Activated CD4-positive, alpha-beta T cell treated with anti-CD3 and anti-CD28 coated beads for 36 hours (primary cell): ENCODE measurements at regions of chr21 and their contacts with region 1.

Region 1: DNA sequence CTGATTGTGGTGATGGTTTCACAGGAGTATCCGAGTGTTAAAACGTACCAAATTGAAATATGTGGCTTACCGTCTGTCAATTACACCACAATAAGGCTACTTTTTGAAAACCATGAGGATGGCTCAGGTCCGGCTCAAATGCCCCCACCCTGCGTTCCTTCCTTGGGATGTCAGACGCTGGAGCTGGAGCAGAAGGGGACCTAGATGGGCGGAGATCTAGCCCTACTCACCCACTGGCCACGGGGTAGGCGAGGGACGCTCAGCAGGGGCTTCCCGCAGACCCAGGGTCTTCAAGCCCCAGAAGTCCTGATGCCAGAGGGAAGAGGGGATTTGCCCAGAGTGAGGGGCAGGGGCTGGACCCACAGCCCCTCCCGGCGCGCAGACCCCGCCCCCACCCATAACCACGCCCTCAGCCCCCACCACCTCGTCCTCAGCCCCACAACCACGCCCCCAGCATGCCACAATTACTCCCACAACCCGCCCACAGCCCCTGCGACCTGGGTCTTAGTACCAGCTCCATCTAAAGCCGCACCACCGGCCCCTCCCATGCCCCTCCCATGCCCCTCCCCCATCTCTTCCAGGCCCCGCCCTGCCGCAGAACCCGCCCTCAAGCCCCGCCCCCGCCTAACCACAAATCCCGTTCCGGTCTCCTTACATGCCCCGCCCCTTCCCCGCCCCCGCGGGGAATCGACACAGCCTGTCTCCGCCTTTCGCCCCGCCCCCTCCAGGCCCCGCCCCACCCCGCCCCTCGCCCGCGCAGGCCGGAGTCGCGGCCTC is at the start of gene LRRC3:
- DNase-seq: peak; percentile 95
- ATAC-seq: peak; percentile 74
- H3K4me3 Mint-ChIP-seq: peak within 1 kb of the TSS; percentile 67
- H3K27ac Mint-ChIP-seq: no peak within 1 kb of the TSS
- H3K4me1 Mint-ChIP-seq: no peaks in the 10 kb centered on the region
- H3K27me3 Mint-ChIP-seq: peaks cover 15% of the 10 kb centered on the region
- total RNA-seq, gene LRRC3: 2.7 to 2.9 TPM

Region 2: DNA sequence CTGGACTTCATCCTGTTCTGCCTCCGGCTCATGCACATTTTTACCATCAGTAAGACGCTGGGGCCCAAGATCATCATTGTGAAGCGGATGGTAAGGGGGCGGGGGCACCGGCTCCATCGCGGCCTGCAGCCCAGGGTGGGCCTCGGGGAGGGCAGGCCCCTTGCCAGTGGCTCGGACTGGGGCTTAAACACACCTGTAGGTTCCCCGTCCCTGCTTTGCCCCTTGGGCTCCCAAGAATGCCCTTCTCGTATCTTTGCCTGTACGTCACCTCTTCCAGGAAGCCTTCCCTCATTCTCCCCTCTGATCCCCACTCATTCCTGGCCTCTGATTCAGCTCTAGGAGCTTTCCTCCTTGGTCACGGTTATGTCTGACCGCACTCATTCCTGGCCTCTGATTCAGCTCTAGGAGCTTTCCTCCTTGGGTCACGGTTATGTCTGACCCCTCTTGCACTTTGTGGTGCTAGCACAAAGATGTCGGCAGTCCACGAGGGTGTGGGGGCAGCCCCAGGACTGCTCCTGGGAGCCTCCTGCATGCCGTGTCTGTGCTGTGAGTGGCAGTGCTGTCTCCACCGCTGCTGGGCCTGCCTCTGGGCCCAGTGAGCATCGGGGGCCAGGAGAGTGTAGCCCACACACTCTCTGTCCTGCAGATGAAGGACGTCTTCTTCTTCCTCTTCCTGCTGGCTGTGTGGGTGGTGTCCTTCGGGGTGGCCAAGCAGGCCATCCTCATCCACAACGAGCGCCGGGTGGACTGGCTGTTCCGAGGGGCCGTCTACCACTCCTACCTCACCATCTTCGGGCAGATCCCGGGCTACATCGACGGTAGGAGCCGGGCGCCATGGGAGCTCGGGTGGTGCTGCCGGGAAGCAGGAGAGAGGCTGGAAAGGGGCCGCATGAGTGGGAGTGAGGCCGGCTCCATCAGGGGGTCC is 48.7 kb before region 1 on chr21:
- CTCF ChIA-PET with region 1: no interaction called
- POLR2A ChIA-PET with region 1: no interaction called
- intact Hi-C with region 1: no loop called
- DNase-seq: no peak
- ATAC-seq: no peak
- H3K4me3 Mint-ChIP-seq: no peak overlapping the region
- H3K27ac Mint-ChIP-seq: no peak overlapping the region
- H3K4me1 Mint-ChIP-seq: peaks cover 7% of the 10 kb centered on the region
- H3K27me3 Mint-ChIP-seq: no peaks in the 10 kb centered on the region

Region 3: DNA sequence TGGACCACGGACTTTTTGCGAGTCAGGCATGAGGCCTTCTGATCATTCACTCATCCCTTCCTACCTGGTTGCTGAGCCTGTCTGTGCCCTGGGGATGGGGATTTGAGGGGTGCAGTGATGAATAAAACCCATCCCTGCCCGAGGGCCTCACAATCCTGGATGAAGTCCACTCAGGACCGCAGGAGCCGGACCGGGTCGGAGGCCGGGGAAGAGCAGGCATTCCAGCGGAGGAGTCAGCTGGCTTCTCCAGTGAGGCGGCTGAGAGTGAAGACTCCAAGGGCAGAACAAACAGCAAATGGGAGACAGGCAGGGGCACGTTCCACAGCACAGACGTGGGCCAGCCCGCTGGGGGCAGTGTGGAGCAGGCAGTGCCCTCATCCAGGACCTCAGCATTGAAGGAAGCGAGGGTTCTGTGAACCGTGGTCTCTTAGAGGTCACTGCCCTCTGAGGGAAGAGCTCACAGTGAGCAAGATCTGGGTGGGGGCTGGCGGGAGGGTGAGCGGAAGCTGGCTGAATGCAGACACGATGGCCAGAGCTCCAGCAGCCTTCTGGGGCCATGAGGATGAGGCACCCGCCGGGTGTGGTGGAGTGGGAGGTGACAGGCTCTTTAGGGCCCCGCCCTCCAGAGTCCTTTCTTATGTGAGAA is 10.5 kb before region 1 on chr21:
- CTCF ChIA-PET with region 1: no interaction called
- POLR2A ChIA-PET with region 1: no interaction called
- intact Hi-C with region 1: no loop called
- DNase-seq: peak; percentile 36
- ATAC-seq: peak; percentile 51
- H3K4me3 Mint-ChIP-seq: no peak overlapping the region
- H3K27ac Mint-ChIP-seq: no peak overlapping the region
- H3K4me1 Mint-ChIP-seq: no peaks in the 10 kb centered on the region
- H3K27me3 Mint-ChIP-seq: peaks cover 3% of the 10 kb centered on the region

Region 4: DNA sequence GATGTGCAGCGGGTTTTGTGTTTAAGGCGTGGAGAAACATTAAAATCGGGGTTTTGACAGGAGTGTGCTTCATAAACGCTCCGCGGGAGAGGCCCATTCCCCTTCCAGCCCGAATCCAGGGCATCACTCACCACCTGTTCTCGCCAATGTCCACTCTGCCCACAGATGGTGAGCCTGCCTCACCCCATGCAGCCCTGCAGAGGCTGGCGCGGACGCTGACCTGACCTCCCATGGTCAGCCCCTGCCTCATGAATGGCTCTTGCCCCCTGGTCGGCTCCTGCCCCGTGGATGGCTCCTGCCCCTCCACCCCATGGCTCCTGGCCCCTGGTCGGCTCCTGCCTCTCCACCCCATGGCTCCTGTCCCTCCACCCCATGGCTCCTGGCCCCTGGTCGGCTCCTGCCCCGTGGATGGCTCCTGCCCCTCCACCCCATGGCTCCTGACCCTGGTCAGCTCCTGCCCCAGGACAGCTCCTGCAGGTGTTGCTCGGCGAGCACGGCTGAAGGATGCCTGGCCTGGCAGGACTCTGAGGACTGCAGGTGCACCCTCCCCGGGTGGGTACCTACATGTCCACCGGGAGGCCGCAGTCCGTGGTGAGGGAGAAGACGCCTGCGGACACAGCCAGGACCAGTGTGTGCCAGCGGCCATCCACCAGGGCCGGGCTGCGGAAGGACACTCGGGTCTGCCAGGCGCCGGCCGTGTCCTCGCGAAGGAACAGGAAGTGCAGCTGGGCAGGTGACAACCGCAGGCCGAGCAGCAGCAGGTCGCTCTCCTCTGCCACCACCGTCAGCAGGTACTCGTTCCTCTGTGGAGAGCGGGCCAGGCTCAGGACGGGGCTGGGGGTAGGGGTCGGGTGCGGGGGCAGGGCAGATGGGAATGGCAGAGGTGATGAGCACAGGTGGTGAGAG is 78.4 kb after region 1 on chr21:
- CTCF ChIA-PET with region 1: no interaction called
- POLR2A ChIA-PET with region 1: interaction called, 3 read pairs
- intact Hi-C with region 1: loop called in 1 of 2 experiments (anchors 1 kb)
- DNase-seq: no peak
- ATAC-seq: no peak
- H3K4me3 Mint-ChIP-seq: no peak overlapping the region
- H3K27ac Mint-ChIP-seq: no peak overlapping the region
- H3K4me1 Mint-ChIP-seq: no peaks in the 10 kb centered on the region
- H3K27me3 Mint-ChIP-seq: no peaks in the 10 kb centered on the region

Region 5: DNA sequence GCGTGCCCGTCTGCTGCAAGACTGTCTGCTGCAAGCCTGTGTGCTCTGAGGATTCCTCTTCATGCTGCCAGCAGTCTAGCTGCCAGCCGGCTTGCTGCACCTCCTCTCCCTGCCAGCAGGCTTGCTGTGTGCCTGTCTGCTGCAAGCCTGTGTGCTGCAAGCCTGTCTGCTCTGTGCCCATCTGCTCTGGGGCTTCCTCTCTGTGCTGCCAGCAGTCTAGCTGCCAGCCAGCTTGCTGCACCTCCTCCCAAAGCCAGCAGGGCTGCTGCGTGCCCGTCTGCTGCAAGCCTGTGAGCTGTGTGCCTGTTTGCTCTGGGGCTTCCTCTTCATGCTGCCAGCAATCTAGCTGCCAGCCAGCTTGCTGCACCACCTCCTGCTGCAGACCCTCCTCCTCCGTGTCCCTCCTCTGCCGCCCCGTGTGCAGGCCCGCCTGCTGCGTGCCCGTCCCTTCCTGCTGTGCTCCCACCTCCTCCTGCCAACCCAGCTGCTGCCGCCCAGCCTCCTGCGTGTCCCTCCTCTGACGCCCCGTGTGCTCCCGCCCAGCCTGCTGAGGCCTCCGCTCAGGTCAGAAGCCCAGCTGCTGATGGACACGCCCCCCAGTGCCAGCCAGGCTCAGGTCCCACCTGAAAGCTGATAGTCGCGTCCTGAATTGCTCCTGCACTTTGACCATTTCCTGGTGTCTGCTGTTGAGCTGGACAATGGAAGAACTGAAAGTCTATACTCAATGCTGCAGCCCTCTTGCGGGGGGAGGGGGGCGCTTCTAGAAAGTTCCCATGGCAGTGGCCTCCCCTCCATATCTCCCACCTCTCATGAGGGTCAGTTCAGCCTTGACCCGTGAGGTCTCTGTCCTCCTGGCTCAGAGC is 119.7 kb after region 1 on chr21:
- CTCF ChIA-PET with region 1: no interaction called
- POLR2A ChIA-PET with region 1: no interaction called
- intact Hi-C with region 1: no loop called
- DNase-seq: no peak
- ATAC-seq: no peak
- H3K4me3 Mint-ChIP-seq: no peak overlapping the region
- H3K27ac Mint-ChIP-seq: no peak overlapping the region
- H3K4me1 Mint-ChIP-seq: no peaks in the 10 kb centered on the region
- H3K27me3 Mint-ChIP-seq: peaks cover 3% of the 10 kb centered on the region